K562 (cell line): ENCODE measurements at regions of chr10 and their contacts with region 1.

Region 1: DNA sequence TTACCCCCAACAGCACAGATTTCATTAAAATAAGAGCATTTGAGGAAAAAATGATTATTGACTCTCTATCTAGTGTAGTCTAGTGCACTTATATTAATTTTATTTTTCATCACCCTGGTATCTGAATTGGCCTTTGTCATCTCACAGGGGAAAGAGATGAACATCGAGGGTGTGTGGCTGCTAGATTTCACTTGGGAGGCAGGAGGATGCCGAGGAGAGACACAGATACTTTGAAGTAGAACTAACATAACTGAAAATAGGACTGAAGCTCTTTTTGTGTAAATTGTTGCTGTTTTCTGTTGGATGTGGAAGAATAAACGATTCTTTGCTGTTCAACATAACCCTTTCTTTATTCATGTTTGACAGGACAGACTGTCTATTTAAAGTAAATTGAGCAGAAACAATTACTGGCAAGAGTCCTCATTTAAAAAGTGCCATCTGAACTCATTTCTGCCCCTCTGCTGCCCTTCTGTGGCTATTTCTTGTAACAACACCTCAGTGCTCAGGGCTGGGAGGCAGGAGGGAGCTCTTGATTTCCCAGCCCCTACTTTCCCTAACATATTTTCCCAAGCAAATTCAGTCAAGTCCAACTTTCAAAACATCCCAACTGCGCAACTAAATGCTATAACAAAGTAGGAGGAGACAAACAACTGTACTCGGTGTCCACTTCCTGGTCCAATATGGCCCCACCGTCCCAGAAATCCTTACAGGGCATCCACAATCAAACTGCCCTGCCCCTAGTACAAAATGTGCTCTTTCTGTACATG is 15.6 kb downstream of the LYZL1 start:
- DNase-seq: peak; percentile 63 to 67 (median 65)
- ATAC-seq: peak; percentile 80
- H3K4me3 ChIP-seq: no peak overlapping the region
- H3K27ac ChIP-seq: no peak overlapping the region
- H3K4me1 ChIP-seq: no peaks in the 10 kb centered on the region
- H3K27me3 ChIP-seq: peaks cover 8 to 18% of the 10 kb centered on the region in 2 experiments; a peak in 4 of 5 replicates
- CTCF ChIP-seq: peak; percentile 66 to 78 (median 76)
- EP300 ChIP-seq: no peak
- POLR2A ChIP-seq: no peak
- RAD21 ChIP-seq: peak; percentile 95

Region 2: GRCh38 chr10:29239569-29240472 is 64.6 kb before region 1 on chr10:
- CTCF ChIA-PET with region 1: interaction called, 17 read pairs
- POLR2A ChIA-PET with region 1: interaction called, 3 read pairs
- in situ Hi-C with region 1: loop called (anchors 5 kb)
- intact Hi-C with region 1: loop called (anchors 1 kb)
- DNase-seq: peak; percentile 43 to 68 (median 53)
- ATAC-seq: peak; percentile 97
- H3K4me3 ChIP-seq: no peak overlapping the region
- H3K27ac ChIP-seq: no peak overlapping the region
- H3K4me1 ChIP-seq: no peaks in the 10 kb centered on the region
- H3K27me3 ChIP-seq: peaks cover 14 to 26% of the 10 kb centered on the region in 2 experiments; a peak in 3 of 5 replicates
- CTCF ChIP-seq: peak; percentile 84 to 87 (median 87)
- EP300 ChIP-seq: no peak
- POLR2A ChIP-seq: no peak
- RAD21 ChIP-seq: peak; percentile 91 to 93